Naive thymus-derived CD8-positive, alpha-beta T cell (primary cell): ENCODE measurements at regions of chr3 and their contacts with region 1.

Region 1: DNA sequence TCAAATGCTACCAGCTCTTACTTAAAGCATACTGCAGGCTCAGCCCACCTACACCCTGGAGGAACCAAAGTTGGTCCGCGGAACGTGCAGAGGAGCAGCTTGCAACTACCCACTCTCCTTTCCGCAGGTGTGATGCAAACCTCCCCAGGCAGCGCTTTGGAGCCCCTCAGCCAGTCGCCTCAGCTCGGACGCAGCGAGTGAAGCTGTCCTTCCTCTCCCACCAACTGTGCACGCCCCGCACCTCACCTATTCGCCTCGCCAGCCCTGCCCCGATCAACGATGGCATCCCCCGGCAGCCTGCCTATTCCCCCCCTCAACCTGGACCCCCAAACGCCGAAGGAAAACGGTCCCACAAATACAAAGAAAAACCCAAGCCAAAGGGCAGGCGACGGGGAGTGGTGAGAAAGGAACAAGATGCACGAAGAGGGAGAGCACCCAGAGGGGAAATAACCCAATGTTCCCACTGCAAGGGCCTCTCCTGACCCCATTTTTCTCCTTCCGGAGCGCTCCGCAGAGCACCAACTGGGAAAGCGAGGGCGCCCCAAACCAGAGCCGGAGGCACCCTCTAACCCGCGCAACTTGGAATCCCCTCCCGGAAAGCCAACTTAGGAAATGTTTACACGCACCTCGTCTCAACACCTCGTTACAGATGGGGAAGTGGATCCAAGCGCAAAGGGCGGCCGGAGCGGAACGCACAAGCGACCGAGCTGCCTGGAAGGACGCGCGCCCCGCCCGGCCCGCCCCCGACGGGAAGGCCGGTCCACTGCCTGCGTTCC is 665 bp downstream of the GLB1 start:
- DNase-seq: peak in 8 of 10 donors; percentile 10 to 70 (median 36)
- ATAC-seq: peak; percentile 65 to 66
- H3K4me3 Mint-ChIP-seq: peak overlapping the region; percentile 90 to 98 (median 94)
- H3K27ac Mint-ChIP-seq: peak overlapping the region in 9 of 10 donors; percentile 71 to 91 (median 83)
- H3K4me1 Mint-ChIP-seq: peaks cover 28 to 41% (median 36%) of the 10 kb centered on the region in 4 donors
- H3K27me3 Mint-ChIP-seq: no peaks in the 10 kb centered on the region

Region 2: GRCh38 chr3:33113772-33114621 is 17.7 kb after region 1 on chr3 and contains the start of gene CRTAP:
- POLR2A ChIA-PET with region 1: interaction called, 17 read pairs
- DNase-seq: peak; percentile 75 to 92 (median 82)
- ATAC-seq: peak; percentile 86 to 88
- H3K4me3 Mint-ChIP-seq: peak within 1 kb of the TSS; percentile 81 to 94 (median 90)
- H3K27ac Mint-ChIP-seq: peak within 1 kb of the TSS in 9 of 10 donors; percentile 81 to 94 (median 92)
- H3K4me1 Mint-ChIP-seq: peaks cover 16 to 46% (median 36%) of the 10 kb centered on the region in 4 donors
- H3K27me3 Mint-ChIP-seq: no peaks in the 10 kb centered on the region
- polyA plus RNA-seq, gene CRTAP: 25.4 to 52.5 (median 36.0) TPM